ENCODE measurements at regions of chr2 and their contacts with region 1.

Region 1: GRCh38 chr2:100321181-100321865 is 978 bp downstream of the LONRF2 start:
- DNase-seq: peak; percentile 26
- H3K4me3 ChIP-seq: peak overlapping the region; percentile 60 to 69
- H3K27ac ChIP-seq: peak overlapping the region; percentile 83 to 84
- H3K4me1 ChIP-seq: no peaks in the 10 kb centered on the region
- H3K27me3 ChIP-seq: no peaks in the 10 kb centered on the region
- CTCF ChIP-seq: peak in 2 of 4 experiments; percentile 31 to 45
- POLR2A ChIP-seq: no peak

Region 2: DNA sequence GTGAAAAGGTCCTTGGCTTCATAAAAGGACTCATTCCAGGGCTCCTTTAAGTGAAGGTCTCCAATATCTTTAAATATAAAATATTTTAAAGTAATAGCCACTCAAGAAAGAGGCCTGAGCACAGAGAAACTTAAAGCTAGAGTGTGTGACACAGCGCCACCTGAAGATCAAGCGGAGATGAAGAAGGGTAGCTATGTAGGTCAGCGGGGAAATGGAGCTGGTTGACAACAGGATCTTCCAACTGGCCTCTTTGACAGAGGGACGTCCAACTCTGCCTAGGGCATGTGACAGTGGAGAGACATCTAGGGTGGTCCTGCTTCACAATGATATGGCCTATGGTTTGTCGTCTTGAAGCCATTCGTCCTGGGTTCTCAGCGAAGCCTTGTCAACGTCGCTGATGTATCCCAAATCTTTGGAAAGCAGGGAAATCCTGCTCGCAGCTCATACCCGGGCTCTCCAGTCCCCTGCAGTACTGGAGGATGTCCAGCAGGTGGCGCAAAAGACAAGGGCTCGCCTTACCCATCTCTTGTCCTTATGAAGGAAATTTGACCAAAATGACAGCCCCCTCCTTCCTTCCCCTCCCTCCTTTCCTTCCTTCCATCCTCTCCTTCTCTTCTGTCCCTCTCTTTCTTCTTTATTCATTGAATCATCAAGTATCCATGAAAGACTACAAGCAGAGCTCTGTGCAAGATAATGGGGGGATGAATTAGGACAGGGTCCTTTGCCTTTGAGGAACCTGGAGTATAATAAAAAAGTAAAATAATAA is 58.6 kb before region 1 on chr2:
- intact Hi-C with region 1: loop called (anchors 5 kb)
- DNase-seq: peak; percentile 29
- H3K4me3 ChIP-seq: no peak overlapping the region
- H3K27ac ChIP-seq: no peak overlapping the region
- H3K4me1 ChIP-seq: no peaks in the 10 kb centered on the region
- H3K27me3 ChIP-seq: no peaks in the 10 kb centered on the region
- CTCF ChIP-seq: peak; percentile 89 to 98 (median 92)
- POLR2A ChIP-seq: no peak

Measured in prostate gland (tissue), 2 donors.